HepG2 (cell line): ENCODE measurements at regions of chr7 and their contacts with region 1.

Region 1: GRCh38 chr7:43700059-43700501 is 29.2 kb downstream of the COA1 start:
- DNase-seq: peak; percentile 46
- ATAC-seq: 0 out of 3 replicates have a peak, but pooled peaks have one; percentile 38
- H3K4me3 ChIP-seq: no peak overlapping the region
- H3K27ac ChIP-seq: no peak overlapping the region
- H3K4me1 ChIP-seq: peaks cover 17% of the 10 kb centered on the region
- H3K27me3 ChIP-seq: no peaks in the 10 kb centered on the region
- CTCF ChIP-seq: peak; percentile 76
- EP300 ChIP-seq: no peak
- POLR2A ChIP-seq: no peak
- RAD21 ChIP-seq: peak; percentile 78

Region 2: GRCh38 chr7:43639858-43640491 is 60.1 kb before region 1 on chr7:
- CTCF ChIA-PET with region 1: no interaction called
- POLR2A ChIA-PET with region 1: interaction called, 3 read pairs
- in situ Hi-C with region 1: loop called (anchors 10 kb)
- intact Hi-C with region 1: loop called (anchors 5 kb)
- DNase-seq: peak; percentile 98
- ATAC-seq: peak; percentile 96
- H3K4me3 ChIP-seq: no peak overlapping the region; a peak in 1 of 6 replicates
- H3K27ac ChIP-seq: peak overlapping the region; percentile 97
- H3K4me1 ChIP-seq: peaks cover 64% of the 10 kb centered on the region
- H3K27me3 ChIP-seq: no peaks in the 10 kb centered on the region
- CTCF ChIP-seq: no peak
- EP300 ChIP-seq: peak; percentile 89 to 91
- POLR2A ChIP-seq: no peak
- RAD21 ChIP-seq: no peak